Heart right ventricle (tissue), 16 donors: ENCODE measurements at regions of chr5 and their contacts with region 1.

Region 1: GRCh38 chr5:1445313-1445894 is at the start of gene SLC6A3:
- DNase-seq: no peak
- ATAC-seq: peak in 7 of 8 donors; percentile 20 to 69 (median 45)
- H3K4me3 ChIP-seq: peak within 1 kb of the TSS in 9 of 10 donors; percentile 2 to 33 (median 8)
- H3K27ac ChIP-seq: no peak within 1 kb of the TSS
- H3K4me1 ChIP-seq: peaks cover 0 to 18% (median 10%) of the 10 kb centered on the region in 9 donors
- H3K27me3 ChIP-seq: peaks cover 31 to 89% (median 77%) of the 10 kb centered on the region in 7 donors
- CTCF ChIP-seq: no peak
- total RNA-seq, gene SLC6A3: 0.18 to 0.19 TPM in 2 of 10 donors, not detected in the others

Region 2: GRCh38 chr5:1235379-1235778 is 210.0 kb before region 1 on chr5:
- intact Hi-C with region 1: loop called in 1 of 10 experiments (anchors 10 kb)
- DNase-seq: no peak
- ATAC-seq: no peak
- H3K4me3 ChIP-seq: no peak overlapping the region
- H3K27ac ChIP-seq: no peak overlapping the region
- H3K4me1 ChIP-seq: no peaks in the 10 kb centered on the region
- H3K27me3 ChIP-seq: peaks cover 0 to 17% (median 0%) of the 10 kb centered on the region in 7 donors
- CTCF ChIP-seq: no peak

Region 3: DNA sequence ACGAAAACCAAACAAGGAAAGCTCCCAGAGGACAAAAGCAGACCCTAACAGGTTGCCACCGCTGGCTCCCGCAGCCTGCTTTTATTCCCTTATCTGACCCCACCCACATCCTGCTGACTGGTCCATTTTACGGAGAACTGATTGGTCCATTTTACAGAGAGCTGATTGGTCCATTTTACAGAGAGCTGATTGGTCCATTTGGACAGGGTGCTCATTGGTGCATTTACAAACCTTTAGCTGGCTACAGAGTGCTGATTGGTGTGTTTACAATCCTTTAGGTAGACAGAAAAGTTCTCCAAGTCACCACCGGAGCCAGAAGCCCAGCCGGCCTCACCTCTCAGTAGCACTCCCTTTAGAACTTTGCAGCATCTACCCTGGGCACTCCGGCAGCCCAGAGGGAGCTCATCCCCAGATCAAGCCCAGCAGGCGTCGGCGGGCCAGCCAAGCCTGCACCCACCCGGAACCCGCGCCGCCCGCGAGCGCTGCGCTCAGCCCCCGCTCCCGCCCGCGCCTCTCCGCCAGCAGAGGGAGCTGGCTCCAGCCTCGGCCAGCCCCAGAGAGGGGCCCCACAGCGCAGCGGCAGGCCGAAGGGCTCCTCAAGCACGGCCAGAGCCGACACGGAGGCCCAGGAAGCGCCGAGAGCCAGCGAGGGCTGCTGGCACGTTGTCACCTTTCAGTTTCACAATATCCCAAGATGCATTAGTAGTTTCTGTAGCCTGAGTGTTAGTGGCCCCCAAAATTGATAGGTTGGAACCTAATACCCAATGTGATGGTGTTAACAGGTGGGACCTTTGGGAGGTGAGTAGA is 65.2 kb before region 1 on chr5:
- intact Hi-C with region 1: no loop called
- DNase-seq: peak in 1 of 2 donors; percentile 56
- ATAC-seq: peak; percentile 70 to 81 (median 78)
- H3K4me3 ChIP-seq: peak overlapping the region in 3 of 10 donors; percentile 8 to 14 (median 10)
- H3K27ac ChIP-seq: no peak overlapping the region
- H3K4me1 ChIP-seq: peaks cover 0 to 9% (median 4%) of the 10 kb centered on the region in 9 donors
- H3K27me3 ChIP-seq: peaks cover 0 to 60% (median 34%) of the 10 kb centered on the region in 7 donors
- CTCF ChIP-seq: peak in 8 of 9 donors; percentile 47 to 83 (median 70)

Region 4: DNA sequence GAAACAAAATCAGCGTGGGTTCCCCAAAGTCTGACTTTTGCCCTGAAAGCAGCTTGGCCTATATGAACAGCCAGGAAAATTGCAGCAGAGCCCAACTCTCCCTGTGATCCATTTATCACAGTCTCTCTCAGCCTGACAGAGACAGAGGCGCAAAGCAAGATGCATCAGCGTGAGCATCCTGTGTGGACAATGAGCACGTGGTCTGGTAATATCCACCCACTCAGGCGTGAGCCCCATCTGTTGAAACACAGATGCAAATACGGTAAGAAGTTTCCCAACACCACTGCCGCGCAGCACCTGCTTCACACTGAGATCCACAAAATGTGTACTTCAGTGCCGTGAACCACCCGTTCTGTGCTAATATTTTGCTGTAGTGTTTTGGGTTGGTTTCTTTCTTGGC is 239.7 kb after region 1 on chr5:
- intact Hi-C with region 1: no loop called
- DNase-seq: no peak
- ATAC-seq: no peak
- H3K4me3 ChIP-seq: no peak overlapping the region
- H3K27ac ChIP-seq: no peak overlapping the region
- H3K4me1 ChIP-seq: no peaks in the 10 kb centered on the region
- H3K27me3 ChIP-seq: peaks cover 4 to 36% (median 11%) of the 10 kb centered on the region in 7 donors
- CTCF ChIP-seq: no peak